ENCODE measurements at regions of chr11 and their contacts with region 1.

Region 1: DNA sequence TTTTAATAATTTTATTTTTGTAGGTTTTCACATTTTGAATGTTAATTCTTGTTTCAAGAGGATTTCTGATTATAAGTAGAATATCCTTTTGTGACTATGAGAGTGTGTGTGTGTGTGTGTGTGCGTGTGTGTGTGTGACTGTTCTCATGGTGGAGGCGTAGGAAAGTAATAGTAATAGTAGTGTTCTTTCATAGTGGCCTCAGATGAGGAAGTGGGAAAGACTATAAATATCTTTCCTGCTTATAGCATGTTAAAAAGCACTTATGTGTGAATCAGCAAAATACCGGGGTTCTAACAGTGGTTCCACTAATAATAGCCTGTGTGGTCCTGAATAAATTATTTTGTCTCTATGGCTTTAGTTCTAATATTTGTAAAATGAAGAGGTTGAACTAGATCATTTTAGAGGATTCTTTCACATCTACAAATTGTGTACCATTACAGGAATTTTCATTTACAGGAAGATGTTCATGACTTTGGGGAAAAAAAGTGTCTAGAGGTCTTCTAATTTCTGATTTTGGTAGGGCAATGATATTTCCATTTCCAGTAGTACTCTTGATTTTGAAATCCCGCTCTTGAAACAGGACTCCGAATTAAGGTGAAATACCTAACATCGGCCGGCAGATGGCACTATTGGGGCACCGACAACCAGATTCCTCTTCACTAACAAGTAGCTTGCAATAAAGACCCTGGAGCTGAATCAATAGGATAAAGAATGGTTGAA is 29.9 kb upstream of the OR10G7 start:
- DNase-seq: peak; percentile 75
- H3K4me3 ChIP-seq: no peak overlapping the region
- H3K27ac ChIP-seq: no peak overlapping the region
- H3K4me1 ChIP-seq: peaks cover 2 to 18% (median 13%) of the 10 kb centered on the region in 4 donors
- H3K27me3 ChIP-seq: peaks cover 0 to 21% (median 11%) of the 10 kb centered on the region in 3 donors
- CTCF ChIP-seq: peak in 3 of 4 experiments; percentile 22 to 70 (median 46)
- EP300 ChIP-seq: no peak
- POLR2A ChIP-seq: no peak

Region 2: GRCh38 chr11:124194698-124195410 is 123.8 kb after region 1 on chr11:
- intact Hi-C with region 1: loop called (anchors 5 kb)
- DNase-seq: no peak
- H3K4me3 ChIP-seq: no peak overlapping the region
- H3K27ac ChIP-seq: peak overlapping the region in 1 of 4 donors; percentile 38
- H3K4me1 ChIP-seq: peaks cover 0 to 13% (median 2%) of the 10 kb centered on the region in 4 donors
- H3K27me3 ChIP-seq: no peaks in the 10 kb centered on the region
- CTCF ChIP-seq: peak in 1 of 4 experiments; percentile 37
- EP300 ChIP-seq: no peak
- POLR2A ChIP-seq: no peak

Region 3: GRCh38 chr11:124207102-124207792 is 136.2 kb after region 1 on chr11:
- intact Hi-C with region 1: no loop called
- DNase-seq: no peak
- H3K4me3 ChIP-seq: no peak overlapping the region
- H3K27ac ChIP-seq: no peak overlapping the region
- H3K4me1 ChIP-seq: no peaks in the 10 kb centered on the region
- H3K27me3 ChIP-seq: no peaks in the 10 kb centered on the region
- CTCF ChIP-seq: no peak
- EP300 ChIP-seq: no peak
- POLR2A ChIP-seq: no peak